CD4-positive, alpha-beta T cell (primary cell): ENCODE measurements at regions of chr6 and their contacts with region 1.

Region 1: GRCh38 chr6:32127717-32128592 is at the start of gene ATF6B:
- DNase-seq: peak; percentile 88 to 100 (median 96)
- ATAC-seq: peak; percentile 93
- H3K4me3 ChIP-seq: peak within 1 kb of the TSS; percentile 81
- H3K4me3 Mint-ChIP-seq: peak within 1 kb of the TSS; percentile 99
- H3K27ac ChIP-seq: peak within 1 kb of the TSS; percentile 63 to 77
- H3K27ac Mint-ChIP-seq: peak within 1 kb of the TSS; percentile 90
- H3K4me1 ChIP-seq: peaks cover 50% of the 10 kb centered on the region
- H3K4me1 Mint-ChIP-seq: peaks cover 52% of the 10 kb centered on the region
- H3K27me3 ChIP-seq: no peaks in the 10 kb centered on the region
- H3K27me3 Mint-ChIP-seq: no peaks in the 10 kb centered on the region
- CTCF ChIP-seq: no peak
- total RNA-seq, gene ATF6B: 72.2 to 75.6 TPM

Region 2: DNA sequence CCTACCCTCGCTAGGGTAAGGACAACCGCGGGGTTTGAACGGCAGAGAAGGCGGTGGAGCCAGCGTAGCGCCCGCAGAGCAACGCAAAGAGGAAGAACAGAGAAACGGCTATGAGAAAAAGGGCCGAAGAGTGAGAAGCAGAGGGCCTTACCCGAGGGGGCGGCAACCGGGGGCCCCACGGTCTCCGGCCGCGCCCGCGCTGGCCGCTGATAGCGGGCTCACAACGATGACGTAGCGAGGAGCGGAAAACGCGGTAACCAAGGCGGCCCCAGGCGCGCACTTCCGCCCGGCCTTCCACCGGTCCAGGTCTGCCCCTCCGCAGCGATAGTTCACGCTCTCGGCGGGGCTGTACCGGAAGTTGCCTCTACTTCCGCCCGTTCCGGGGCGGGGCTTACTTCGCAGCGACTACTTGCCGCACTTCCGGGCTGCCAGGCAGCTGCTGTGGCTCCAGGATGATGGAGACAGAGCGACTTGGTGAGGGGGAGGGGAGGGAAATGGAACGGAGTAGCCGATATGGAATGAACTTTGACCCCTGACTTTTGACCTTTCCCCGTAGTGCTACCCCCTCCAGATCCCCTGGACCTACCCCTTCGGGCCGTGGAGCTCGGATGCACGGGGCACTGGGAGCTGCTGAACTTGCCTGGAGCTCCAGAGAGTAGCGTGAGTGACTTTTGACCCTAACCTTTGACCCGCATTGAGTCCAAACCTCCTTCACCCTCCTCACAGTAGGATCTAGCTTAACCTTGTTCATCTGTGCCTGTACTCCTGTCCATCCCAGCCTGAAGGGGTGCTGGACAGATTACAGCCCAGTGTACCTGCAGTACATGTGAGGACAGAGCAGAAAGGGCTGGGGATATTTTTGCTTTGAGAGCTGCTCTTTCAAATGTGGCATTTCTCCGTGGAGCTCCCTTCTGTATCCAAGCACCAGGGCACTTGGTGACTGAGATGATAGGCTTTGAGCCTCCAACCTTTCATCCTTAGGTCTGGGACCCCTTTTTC is 168.9 kb before region 1 on chr6 and contains the starts of genes NELFE and SKIC2:
- CTCF ChIA-PET with region 1: no interaction called
- POLR2A ChIA-PET with region 1: interaction called, 3 read pairs
- intact Hi-C with region 1: loop called in 1 of 2 experiments (anchors 5 kb)
- DNase-seq: peak; percentile 96 to 100 (median 98)
- ATAC-seq: peak; percentile 97
- H3K4me3 ChIP-seq: peak within 1 kb of the TSS; percentile 97
- H3K4me3 Mint-ChIP-seq: peak within 1 kb of the TSS; percentile 96
- H3K27ac ChIP-seq: peak within 1 kb of the TSS; percentile 94 to 96
- H3K27ac Mint-ChIP-seq: peak within 1 kb of the TSS; percentile 97
- H3K4me1 ChIP-seq: peaks cover 30% of the 10 kb centered on the region
- H3K4me1 Mint-ChIP-seq: peaks cover 38% of the 10 kb centered on the region
- H3K27me3 ChIP-seq: no peaks in the 10 kb centered on the region
- H3K27me3 Mint-ChIP-seq: no peaks in the 10 kb centered on the region
- CTCF ChIP-seq: no peak
- total RNA-seq, gene NELFE: 53.8 to 58.2 TPM
- total RNA-seq, gene SKIC2: 133 to 141 TPM

Region 3: GRCh38 chr6:32177788-32178546 is 50.0 kb after region 1 on chr6 and contains the start of gene RNF5:
- CTCF ChIA-PET with region 1: interaction called, 3 read pairs
- POLR2A ChIA-PET with region 1: interaction called, 42 read pairs
- intact Hi-C with region 1: loop called (anchors 1 kb)
- DNase-seq: peak; percentile 83 to 99 (median 92)
- ATAC-seq: peak; percentile 81
- H3K4me3 ChIP-seq: peak within 1 kb of the TSS; percentile 91
- H3K4me3 Mint-ChIP-seq: peak within 1 kb of the TSS; percentile 91
- H3K27ac ChIP-seq: peak within 1 kb of the TSS; percentile 93 to 98
- H3K27ac Mint-ChIP-seq: peak within 1 kb of the TSS; percentile 85
- H3K4me1 ChIP-seq: peaks cover 79% of the 10 kb centered on the region
- H3K4me1 Mint-ChIP-seq: peaks cover 65% of the 10 kb centered on the region
- H3K27me3 ChIP-seq: no peaks in the 10 kb centered on the region
- H3K27me3 Mint-ChIP-seq: no peaks in the 10 kb centered on the region
- CTCF ChIP-seq: no peak
- total RNA-seq, gene RNF5: 9.6 to 9.9 TPM

Region 4: DNA sequence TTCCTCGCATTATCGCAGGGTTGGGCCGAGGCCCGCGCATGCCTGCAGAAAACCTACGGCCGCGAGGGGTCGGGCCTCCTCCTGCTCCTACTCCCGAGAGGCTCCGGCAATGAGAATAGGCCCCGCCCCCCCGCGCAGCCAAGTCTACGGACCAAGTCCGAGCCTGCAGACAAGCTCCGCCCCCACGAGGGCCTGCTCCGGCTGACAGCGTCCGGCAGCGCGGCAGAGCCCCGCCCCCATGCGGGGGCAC is 67.6 kb after region 1 on chr6:
- CTCF ChIA-PET with region 1: interaction called, 14 read pairs
- POLR2A ChIA-PET with region 1: interaction called, 48 read pairs
- intact Hi-C with region 1: loop called (anchors 1 kb)
- DNase-seq: peak in 13 of 14 experiments; percentile 97 to 100 (median 100)
- ATAC-seq: peak; percentile 82
- H3K4me3 ChIP-seq: peak overlapping the region; percentile 100
- H3K4me3 Mint-ChIP-seq: peak overlapping the region; percentile 99
- H3K27ac ChIP-seq: peak overlapping the region; percentile 87 to 100
- H3K27ac Mint-ChIP-seq: peak overlapping the region; percentile 96
- H3K4me1 ChIP-seq: peaks cover 52% of the 10 kb centered on the region
- H3K4me1 Mint-ChIP-seq: peaks cover 48% of the 10 kb centered on the region
- H3K27me3 ChIP-seq: no peaks in the 10 kb centered on the region
- H3K27me3 Mint-ChIP-seq: no peaks in the 10 kb centered on the region
- CTCF ChIP-seq: peak; percentile 31